ENCODE measurements at regions of chr6 and their contacts with region 1.

Region 1: DNA sequence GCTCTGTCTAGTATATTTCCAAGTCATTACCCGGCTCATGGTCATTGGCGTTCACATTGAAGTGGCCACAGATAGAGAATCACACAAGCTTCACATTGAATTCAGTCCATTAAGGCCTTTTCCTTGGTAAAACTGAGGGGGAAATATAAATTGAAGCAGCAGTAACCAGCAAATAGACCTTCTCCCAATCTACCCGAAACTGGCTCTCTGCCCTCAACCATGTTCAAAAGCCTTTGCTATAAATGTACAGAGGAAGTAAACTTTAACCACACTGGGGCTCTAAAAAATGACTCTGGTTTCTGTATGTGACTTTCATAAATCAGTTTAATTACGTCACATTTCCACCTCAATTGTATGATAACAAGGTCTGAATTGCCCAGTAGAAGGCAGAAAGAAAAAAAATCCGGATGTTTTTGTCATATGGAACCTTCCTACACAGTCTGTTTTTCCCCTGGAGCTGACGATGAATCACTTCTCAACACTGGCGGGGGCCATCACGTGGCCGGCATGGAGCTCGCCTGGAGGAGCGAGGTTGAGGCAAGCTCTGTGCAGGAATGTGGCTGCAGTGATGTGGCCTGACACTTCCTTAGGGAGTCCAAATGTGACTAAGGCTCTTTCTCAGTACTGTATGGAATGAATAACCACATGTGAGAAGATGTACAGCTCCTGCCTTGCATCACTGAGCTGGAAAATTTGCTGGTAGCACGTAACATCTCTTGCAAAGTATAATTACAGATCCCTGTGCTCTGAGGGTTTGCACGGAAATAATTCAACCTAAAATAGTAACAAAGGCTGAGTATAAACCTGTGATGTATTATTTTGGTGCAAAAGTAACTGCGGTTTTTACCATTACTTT is 58.6 kb upstream of the SNX9 start:
- DNase-seq: peak; percentile 90
- ATAC-seq: peak; percentile 51
- H3K4me3 ChIP-seq: peak overlapping the region; percentile 13 to 56 (median 30)
- H3K4me3 Mint-ChIP-seq: peak overlapping the region; percentile 69
- H3K27ac ChIP-seq: peak overlapping the region; percentile 84
- H3K27ac Mint-ChIP-seq: peak overlapping the region; percentile 97
- H3K4me1 ChIP-seq: peaks cover 88 to 95% of the 10 kb centered on the region in 2 donors
- H3K4me1 Mint-ChIP-seq: peaks cover 88% of the 10 kb centered on the region
- H3K27me3 ChIP-seq: no peaks in the 10 kb centered on the region
- H3K27me3 Mint-ChIP-seq: no peaks in the 10 kb centered on the region
- CTCF ChIP-seq: no peak

Region 2: DNA sequence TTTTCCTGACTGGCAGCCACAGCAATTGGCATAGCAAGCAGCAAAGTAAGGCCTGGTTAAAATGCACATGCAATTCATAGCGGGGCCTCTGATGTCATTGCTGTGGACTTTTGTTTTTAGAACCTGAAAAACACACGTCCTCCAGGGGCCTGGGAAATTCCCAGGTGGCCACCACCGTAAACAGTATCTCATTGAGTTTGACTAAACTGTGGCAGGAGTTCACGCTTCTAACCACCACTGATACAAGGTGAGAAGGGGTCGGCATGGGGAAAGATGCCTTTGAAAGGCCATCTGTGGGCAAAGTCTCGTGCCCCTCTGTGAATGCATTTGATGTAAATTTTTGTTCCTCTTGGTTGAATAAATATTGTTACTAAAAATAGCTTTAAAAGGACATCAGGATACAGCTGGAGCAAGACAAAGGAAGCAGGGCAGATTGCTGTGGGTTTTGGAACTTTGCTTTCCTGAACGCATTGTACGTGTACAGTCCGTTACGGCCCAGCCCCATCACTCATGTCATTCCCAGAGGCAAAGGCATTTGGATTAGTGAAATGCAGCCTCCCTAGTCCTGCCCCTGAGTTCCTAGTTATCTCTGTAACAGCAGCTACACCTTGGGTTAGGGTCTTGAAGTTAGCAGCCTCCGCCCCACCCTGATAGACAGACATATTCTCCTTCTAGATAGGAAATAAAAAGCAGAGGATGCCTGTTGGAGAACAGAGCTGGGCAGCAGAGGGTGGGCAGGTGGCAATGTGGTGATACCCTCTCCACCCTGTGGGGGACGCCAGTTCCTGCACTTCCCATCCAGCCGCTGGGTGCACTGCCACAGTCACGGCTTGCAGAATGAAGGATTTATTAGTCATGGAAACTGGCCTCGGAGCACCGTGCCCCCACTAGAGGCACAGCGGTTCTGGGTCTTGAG is 303.1 kb before region 1 on chr6:
- CTCF ChIA-PET with region 1: no interaction called
- POLR2A ChIA-PET with region 1: no interaction called
- intact Hi-C with region 1: loop called (anchors 1 kb)
- DNase-seq: peak; percentile 84
- ATAC-seq: peak; percentile 67
- H3K4me3 ChIP-seq: peak overlapping the region in 1 of 5 experiments; percentile 30
- H3K4me3 Mint-ChIP-seq: peak overlapping the region; percentile 71
- H3K27ac ChIP-seq: peak overlapping the region; percentile 36 to 53
- H3K27ac Mint-ChIP-seq: peak overlapping the region; percentile 94
- H3K4me1 ChIP-seq: peaks cover 60 to 77% of the 10 kb centered on the region in 2 donors
- H3K4me1 Mint-ChIP-seq: peaks cover 73% of the 10 kb centered on the region
- H3K27me3 ChIP-seq: no peaks in the 10 kb centered on the region
- H3K27me3 Mint-ChIP-seq: no peaks in the 10 kb centered on the region
- CTCF ChIP-seq: peak; percentile 31

Region 3: DNA sequence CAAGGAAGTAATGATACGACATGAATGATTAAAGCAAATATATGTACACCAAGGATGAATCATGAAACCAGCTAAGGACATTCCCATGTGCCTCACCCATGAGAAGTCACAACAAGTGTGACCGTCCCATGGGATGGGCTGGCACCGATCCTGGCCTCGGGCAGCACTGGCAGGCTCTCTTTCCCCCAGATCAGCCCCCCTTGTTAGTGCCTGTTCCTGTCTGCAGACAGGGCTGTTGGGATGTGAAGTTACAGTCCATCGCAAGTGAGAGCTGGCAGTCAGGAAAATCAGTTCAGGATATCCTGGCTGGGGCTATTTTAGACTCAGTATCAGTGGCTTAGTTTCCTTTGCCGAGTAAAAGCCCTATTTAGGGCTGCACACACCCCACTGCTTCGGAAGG is 70.5 kb before region 1 on chr6:
- CTCF ChIA-PET with region 1: no interaction called
- POLR2A ChIA-PET with region 1: no interaction called
- intact Hi-C with region 1: no loop called
- DNase-seq: no peak
- ATAC-seq: no peak
- H3K4me3 ChIP-seq: no peak overlapping the region
- H3K4me3 Mint-ChIP-seq: no peak overlapping the region
- H3K27ac ChIP-seq: no peak overlapping the region
- H3K27ac Mint-ChIP-seq: no peak overlapping the region
- H3K4me1 ChIP-seq: no peaks in the 10 kb centered on the region
- H3K4me1 Mint-ChIP-seq: no peaks in the 10 kb centered on the region
- H3K27me3 ChIP-seq: no peaks in the 10 kb centered on the region
- H3K27me3 Mint-ChIP-seq: peaks cover 32% of the 10 kb centered on the region
- CTCF ChIP-seq: no peak

Region 4: DNA sequence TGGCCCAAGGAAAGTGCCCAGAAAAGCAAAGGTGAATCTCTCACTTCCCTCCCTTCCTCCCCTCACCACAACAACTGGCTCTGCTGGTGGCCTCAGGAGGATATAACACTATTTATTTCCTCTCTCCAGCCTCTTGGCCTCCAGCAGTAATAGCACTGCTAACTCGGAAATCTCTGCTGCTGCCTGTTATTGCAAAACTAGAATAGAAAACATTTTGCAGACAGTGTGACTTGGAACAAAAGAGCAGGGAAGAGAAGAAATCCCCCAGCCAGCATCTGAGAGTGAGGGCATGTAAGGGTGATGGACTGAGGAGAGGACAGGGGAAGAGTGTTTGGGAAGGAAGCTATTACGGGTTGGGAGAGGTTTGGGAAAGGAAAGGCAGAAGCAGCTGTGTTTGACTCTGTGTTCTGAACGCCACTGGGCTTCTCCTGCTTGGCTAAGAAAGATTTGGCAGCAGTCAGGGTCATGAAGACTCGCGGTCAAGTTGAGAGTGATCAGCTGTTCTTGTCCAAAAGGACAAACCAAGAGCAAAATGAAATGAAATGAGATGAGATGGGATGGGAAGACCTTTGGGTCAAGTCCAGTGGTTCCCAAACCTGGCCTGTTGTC is 22.4 kb before region 1 on chr6:
- CTCF ChIA-PET with region 1: no interaction called
- POLR2A ChIA-PET with region 1: no interaction called
- intact Hi-C with region 1: no loop called
- DNase-seq: no peak
- ATAC-seq: no peak
- H3K4me3 ChIP-seq: no peak overlapping the region
- H3K4me3 Mint-ChIP-seq: no peak overlapping the region
- H3K27ac ChIP-seq: no peak overlapping the region
- H3K27ac Mint-ChIP-seq: no peak overlapping the region
- H3K4me1 ChIP-seq: no peaks in the 10 kb centered on the region
- H3K4me1 Mint-ChIP-seq: no peaks in the 10 kb centered on the region
- H3K27me3 ChIP-seq: no peaks in the 10 kb centered on the region
- H3K27me3 Mint-ChIP-seq: peaks cover 11% of the 10 kb centered on the region
- CTCF ChIP-seq: no peak

Region 5: DNA sequence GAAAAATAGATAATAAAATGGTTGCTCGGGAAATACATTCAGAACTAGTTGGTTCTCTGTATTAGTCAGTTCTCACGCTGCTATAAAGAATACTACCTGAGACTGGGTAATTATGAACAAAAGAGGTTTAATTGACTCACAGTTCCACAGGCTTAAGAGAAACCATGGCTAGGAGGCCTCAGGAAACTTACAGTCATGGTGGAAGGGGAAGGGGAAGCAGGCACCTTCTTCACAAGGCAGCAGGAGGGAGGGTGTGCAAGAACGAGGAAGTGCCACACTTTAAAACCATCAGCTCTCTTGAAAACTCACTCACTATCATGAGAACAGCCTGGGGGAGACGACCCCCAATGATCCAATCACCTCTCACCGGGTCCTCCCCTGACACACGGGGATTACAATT is 34.4 kb after region 1 on chr6:
- CTCF ChIA-PET with region 1: no interaction called
- POLR2A ChIA-PET with region 1: no interaction called
- intact Hi-C with region 1: loop called (anchors 5 kb)
- DNase-seq: no peak
- ATAC-seq: no peak
- H3K4me3 ChIP-seq: no peak overlapping the region
- H3K4me3 Mint-ChIP-seq: no peak overlapping the region
- H3K27ac ChIP-seq: no peak overlapping the region
- H3K27ac Mint-ChIP-seq: no peak overlapping the region
- H3K4me1 ChIP-seq: no peaks in the 10 kb centered on the region
- H3K4me1 Mint-ChIP-seq: peaks cover 18% of the 10 kb centered on the region
- H3K27me3 ChIP-seq: peaks cover 0 to 3% (median 0%) of the 10 kb centered on the region in 4 experiments
- H3K27me3 Mint-ChIP-seq: no peaks in the 10 kb centered on the region
- CTCF ChIP-seq: no peak

Region 6: DNA sequence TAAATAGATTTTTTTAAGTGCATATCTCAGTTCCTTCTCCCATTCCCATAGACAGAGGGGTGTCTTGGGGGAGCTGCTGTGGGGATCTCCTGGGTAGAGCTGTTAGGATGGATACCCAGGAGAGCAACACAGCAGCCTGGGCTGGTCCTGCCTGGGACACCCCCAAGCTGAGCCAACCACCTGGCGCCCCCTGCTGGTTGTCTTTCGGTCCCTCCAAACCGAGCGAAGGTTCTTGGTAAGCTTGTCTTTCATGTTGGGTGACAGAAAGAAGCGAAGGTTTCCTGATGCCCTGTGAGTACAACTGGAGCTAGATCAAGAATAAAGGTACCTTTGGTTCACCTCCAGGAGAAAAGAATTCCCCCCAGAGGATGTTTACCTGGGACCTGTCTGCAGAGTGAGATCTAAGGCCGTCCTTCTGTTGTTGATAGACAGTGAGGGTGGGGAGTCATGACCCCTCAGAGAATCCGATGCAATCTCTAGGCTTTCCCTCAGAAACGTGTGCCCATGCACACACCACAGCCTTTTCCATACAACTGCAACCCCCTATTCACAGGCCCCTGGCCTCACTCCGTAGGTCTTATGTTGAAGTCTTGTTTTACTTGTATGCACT is 109.4 kb after region 1 on chr6:
- CTCF ChIA-PET with region 1: interaction called, 340 read pairs
- POLR2A ChIA-PET with region 1: no interaction called
- intact Hi-C with region 1: loop called (anchors 2 kb)
- DNase-seq: peak; percentile 85
- ATAC-seq: peak; percentile 86
- H3K4me3 ChIP-seq: no peak overlapping the region
- H3K4me3 Mint-ChIP-seq: no peak overlapping the region
- H3K27ac ChIP-seq: no peak overlapping the region
- H3K27ac Mint-ChIP-seq: no peak overlapping the region
- H3K4me1 ChIP-seq: peaks cover 12 to 16% of the 10 kb centered on the region in 2 donors
- H3K4me1 Mint-ChIP-seq: peaks cover 26% of the 10 kb centered on the region
- H3K27me3 ChIP-seq: no peaks in the 10 kb centered on the region
- H3K27me3 Mint-ChIP-seq: no peaks in the 10 kb centered on the region
- CTCF ChIP-seq: peak; percentile 96

Region 7: DNA sequence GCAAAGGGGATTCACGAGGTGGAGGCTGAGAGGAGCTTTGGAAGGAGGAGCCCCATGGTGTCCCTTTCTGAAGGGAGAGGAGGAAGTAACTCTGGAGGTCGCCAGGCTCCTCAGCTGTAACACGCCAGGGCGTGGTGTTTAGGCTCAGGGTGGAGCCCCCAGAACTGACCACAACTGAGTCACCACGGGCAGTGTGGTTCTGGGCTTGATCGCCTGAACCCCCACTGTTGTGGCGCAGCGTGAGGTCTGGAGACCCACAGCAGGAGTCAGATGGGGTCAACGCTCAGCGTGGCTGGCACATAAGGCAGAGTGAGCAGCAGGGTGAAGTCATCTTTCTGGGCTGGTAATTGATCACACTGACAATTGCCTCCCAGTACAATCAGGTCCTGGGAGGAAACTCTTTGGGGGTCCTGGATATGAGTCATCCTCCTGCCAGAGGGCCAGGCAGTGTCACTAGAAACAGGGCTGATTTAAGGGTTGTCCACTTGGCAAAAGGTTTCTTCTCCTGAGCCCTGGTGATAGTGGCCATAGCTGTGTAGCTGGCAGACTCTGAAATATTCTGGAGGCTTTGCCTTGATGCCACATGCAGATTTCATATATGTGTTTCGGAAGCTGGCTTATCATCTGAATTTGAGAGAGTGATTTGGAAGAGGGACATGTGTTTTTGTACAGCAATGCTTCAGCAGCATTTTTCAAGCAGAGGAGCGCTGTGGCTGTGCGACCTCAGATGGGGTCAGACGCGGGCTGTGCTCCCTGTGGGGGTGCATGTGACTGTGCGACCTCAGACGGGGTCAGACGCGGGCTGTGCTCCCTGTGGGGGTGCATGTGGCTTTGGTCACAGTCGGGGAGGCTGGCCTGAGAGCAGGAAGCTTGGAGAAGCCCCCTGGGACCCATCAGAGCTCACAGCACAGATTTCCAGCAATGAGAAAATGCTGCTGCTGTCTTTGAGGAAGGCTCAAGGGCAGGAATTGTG is 267.3 kb after region 1 on chr6:
- CTCF ChIA-PET with region 1: interaction called, 4 read pairs
- POLR2A ChIA-PET with region 1: no interaction called
- intact Hi-C with region 1: loop called (anchors 5 kb)
- DNase-seq: no peak
- ATAC-seq: peak; percentile 39
- H3K4me3 ChIP-seq: no peak overlapping the region
- H3K4me3 Mint-ChIP-seq: peak overlapping the region; percentile 65
- H3K27ac ChIP-seq: peak overlapping the region; percentile 35 to 52
- H3K27ac Mint-ChIP-seq: peak overlapping the region; percentile 89
- H3K4me1 ChIP-seq: peaks cover 17 to 26% of the 10 kb centered on the region in 2 donors
- H3K4me1 Mint-ChIP-seq: peaks cover 31% of the 10 kb centered on the region
- H3K27me3 ChIP-seq: no peaks in the 10 kb centered on the region
- H3K27me3 Mint-ChIP-seq: no peaks in the 10 kb centered on the region
- CTCF ChIP-seq: no peak

Region 8: GRCh38 chr6:159110013-159110412 is 1345.6 kb after region 1 on chr6:
- CTCF ChIA-PET with region 1: no interaction called
- POLR2A ChIA-PET with region 1: no interaction called
- intact Hi-C with region 1: loop called (anchors 10 kb)
- DNase-seq: peak; percentile 58
- ATAC-seq: no peak
- H3K4me3 ChIP-seq: no peak overlapping the region
- H3K4me3 Mint-ChIP-seq: peak overlapping the region; percentile 37
- H3K27ac ChIP-seq: peak overlapping the region; percentile 22 to 94
- H3K27ac Mint-ChIP-seq: peak overlapping the region; percentile 82
- H3K4me1 ChIP-seq: peaks cover 89 to 93% of the 10 kb centered on the region in 2 donors
- H3K4me1 Mint-ChIP-seq: peaks cover 85% of the 10 kb centered on the region
- H3K27me3 ChIP-seq: no peaks in the 10 kb centered on the region
- H3K27me3 Mint-ChIP-seq: no peaks in the 10 kb centered on the region
- CTCF ChIP-seq: peak; percentile 81

Measured in B cell (primary cell).